Panc1 (cell line): ENCODE measurements at regions of chr12 and their contacts with region 1.

Region 1: DNA sequence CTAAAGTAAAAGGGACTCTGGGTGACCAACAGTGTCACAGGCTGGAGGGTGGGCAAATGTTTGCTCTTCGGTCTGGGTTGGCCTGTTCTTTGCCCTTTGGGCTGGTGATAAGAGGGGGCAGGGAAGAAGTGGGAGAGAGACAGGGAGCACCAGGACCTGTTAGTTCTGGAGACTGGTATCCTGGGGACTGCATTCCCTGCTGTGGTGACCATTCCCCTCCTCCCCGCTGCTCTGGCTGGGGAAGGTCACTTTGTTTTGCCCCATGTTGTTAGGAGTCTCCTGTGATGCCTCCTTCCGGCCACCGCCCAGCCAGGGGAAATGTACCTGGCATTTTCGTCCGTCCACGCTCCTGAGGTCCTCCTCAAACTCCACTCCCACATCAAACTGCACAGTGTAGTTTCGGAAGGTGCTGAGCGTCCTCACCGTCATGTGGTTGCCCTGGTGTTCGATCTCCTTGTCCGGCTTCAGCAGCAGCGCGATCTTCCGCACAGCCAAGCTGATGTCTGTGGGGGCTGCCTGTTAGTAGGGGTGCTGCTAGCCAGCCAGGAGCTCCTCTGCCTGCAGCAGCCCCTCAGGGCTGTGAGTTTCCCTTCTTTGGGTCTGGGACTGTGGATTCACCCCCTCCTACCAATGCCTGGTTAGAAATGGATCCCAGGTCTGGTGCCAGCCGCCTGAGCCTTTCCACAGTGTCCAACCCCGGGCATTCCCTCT is 618 bp downstream of the RBP5 start:
- DNase-seq: no peak
- ATAC-seq: no peak
- H3K4me3 ChIP-seq: no peak overlapping the region
- H3K27ac ChIP-seq: no peak overlapping the region
- H3K4me1 ChIP-seq: no peaks in the 10 kb centered on the region
- H3K27me3 ChIP-seq: no peaks in the 10 kb centered on the region
- CTCF ChIP-seq: no peak

Region 2: DNA sequence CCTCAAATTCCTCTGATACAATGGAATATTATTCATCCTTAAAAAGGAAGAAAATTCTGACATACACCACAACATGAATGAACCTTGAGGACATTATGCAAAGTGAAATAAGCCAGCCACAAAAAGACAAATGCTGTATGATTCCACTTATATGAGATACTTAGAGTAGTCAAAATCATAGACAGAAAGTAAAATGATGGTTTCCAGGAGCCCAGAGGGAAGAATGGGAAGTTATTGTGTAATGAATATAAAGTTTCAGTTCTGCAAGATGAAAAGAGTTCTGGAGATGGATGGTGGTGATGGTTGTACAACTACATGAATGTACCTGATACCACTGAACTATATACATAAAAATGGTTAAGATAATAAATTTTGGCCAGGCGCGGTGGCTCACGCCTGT is 1021.9 kb before region 1 on chr12:
- CTCF ChIA-PET with region 1: no interaction called
- POLR2A ChIA-PET with region 1: interaction called, 19 read pairs
- in situ Hi-C with region 1: no loop called
- intact Hi-C with region 1: no loop called
- DNase-seq: no peak
- ATAC-seq: no peak
- H3K4me3 ChIP-seq: no peak overlapping the region
- H3K27ac ChIP-seq: no peak overlapping the region
- H3K4me1 ChIP-seq: no peaks in the 10 kb centered on the region
- H3K27me3 ChIP-seq: no peaks in the 10 kb centered on the region
- CTCF ChIP-seq: no peak

Region 3: DNA sequence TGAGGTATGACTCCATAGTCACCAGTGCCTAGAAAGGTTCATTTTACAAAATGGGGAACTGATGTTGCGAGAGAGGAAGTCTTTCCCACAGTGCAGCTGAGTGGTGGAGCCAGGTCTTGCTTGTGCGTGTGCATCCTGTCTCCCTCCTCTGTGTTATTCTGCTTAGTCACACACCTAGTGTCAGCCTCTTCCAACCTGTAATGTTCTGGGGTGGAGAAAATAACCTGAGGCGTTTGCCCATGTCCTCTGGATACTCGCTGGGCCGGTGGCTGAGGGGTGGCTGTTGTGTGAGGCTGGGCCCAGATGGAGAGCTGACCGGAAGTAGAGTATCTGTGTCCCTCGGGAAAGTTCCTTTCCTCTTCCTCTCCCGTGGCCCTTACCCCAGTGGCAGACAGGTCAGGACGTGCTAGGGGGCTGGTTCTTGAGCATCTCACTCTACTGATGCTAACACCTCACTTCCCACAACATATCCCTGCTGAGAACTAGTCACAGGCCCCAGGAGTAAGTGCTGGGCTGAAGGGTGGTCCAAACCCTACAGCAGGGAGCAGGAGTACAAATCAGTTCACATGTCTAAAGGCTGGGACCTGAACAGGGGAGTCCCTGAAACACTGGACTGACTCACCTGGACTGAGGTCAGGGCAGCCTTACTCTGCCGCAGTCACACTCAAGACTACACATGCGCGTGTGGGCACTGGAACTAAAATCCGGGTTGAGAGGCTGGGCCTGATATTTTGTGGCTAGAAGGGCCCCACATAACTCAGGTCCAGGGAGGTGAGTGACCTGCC is 382.1 kb before region 1 on chr12:
- CTCF ChIA-PET with region 1: no interaction called
- POLR2A ChIA-PET with region 1: no interaction called
- in situ Hi-C with region 1: no loop called
- intact Hi-C with region 1: no loop called
- DNase-seq: no peak
- ATAC-seq: peak; percentile 54
- H3K4me3 ChIP-seq: no peak overlapping the region
- H3K27ac ChIP-seq: no peak overlapping the region
- H3K4me1 ChIP-seq: no peaks in the 10 kb centered on the region
- H3K27me3 ChIP-seq: no peaks in the 10 kb centered on the region
- CTCF ChIP-seq: no peak

Region 4: GRCh38 chr12:7289743-7290142 is 161.7 kb after region 1 on chr12:
- CTCF ChIA-PET with region 1: no interaction called
- POLR2A ChIA-PET with region 1: no interaction called
- in situ Hi-C with region 1: no loop called
- intact Hi-C with region 1: no loop called
- DNase-seq: no peak
- ATAC-seq: no peak
- H3K4me3 ChIP-seq: no peak overlapping the region
- H3K27ac ChIP-seq: no peak overlapping the region
- H3K4me1 ChIP-seq: no peaks in the 10 kb centered on the region
- H3K27me3 ChIP-seq: no peaks in the 10 kb centered on the region
- CTCF ChIP-seq: no peak